Panc1 (cell line): ENCODE measurements at regions of chr10 and their contacts with region 1.

Region 1: DNA sequence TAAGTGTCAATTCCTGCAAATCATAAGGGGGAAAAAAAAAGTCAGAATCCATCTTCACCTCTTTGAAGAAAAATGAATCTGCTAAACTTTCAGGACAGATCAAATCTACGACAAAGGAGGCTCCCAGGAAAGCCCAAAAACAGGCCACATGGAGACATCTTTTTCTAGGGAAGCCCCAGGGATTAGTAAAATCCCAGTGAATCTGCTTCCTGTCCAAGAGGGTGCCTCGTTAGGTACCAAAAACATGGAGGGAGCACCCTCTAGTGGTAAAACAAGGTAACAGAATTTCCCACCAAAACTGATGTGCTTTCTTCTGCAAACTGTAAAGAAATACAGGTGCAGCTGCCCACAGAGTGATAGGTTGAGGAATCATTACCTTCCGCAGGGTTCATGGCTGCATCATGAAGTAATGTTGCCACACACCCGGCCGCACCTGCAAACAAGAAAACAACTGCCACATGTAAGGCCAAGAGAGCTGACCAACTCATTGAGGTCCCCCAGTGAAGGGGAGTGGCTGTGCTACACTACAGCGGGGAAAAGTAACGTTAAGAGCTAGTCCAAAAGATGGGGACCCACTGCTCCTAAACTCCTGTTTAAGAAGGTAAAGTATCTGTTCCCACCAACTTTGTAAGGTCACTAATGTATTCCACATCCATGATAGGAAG is 7.9 kb downstream of the SLC25A28 start:
- DNase-seq: peak; percentile 48
- ATAC-seq: peak; percentile 82
- H3K4me3 ChIP-seq: no peak overlapping the region
- H3K27ac ChIP-seq: no peak overlapping the region
- H3K4me1 ChIP-seq: peaks cover 2% of the 10 kb centered on the region
- H3K27me3 ChIP-seq: no peaks in the 10 kb centered on the region
- CTCF ChIP-seq: peak; percentile 93

Region 2: DNA sequence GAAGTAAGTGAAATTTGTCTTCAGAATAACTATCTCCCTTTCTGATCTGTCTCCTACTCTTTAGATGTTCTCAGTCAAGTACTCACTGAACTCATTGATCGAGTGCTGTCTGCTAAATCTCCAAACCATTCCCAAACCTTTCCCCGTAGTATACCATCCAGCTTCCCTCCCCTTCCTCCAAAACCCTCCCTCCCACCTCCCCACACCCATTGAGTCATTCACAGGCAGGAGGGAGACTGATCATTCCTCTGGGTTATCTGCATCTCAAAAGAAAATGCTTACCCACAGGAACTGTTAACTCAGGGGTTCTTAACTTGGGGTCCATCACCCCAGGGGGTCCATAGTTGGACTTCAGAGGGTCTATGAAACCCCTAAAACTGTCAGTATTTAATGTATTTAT is 219.3 kb before region 1 on chr10:
- CTCF ChIA-PET with region 1: no interaction called
- POLR2A ChIA-PET with region 1: no interaction called
- in situ Hi-C with region 1: no loop called
- intact Hi-C with region 1: loop called (anchors 2 kb)
- DNase-seq: no peak
- ATAC-seq: no peak
- H3K4me3 ChIP-seq: no peak overlapping the region
- H3K27ac ChIP-seq: 0 out of 2 replicates have a peak overlapping the region, but pooled peaks have one; percentile 17
- H3K4me1 ChIP-seq: peaks cover 30% of the 10 kb centered on the region
- H3K27me3 ChIP-seq: no peaks in the 10 kb centered on the region
- CTCF ChIP-seq: no peak

Region 3: GRCh38 chr10:99560277-99561126 is 51.8 kb before region 1 on chr10:
- CTCF ChIA-PET with region 1: no interaction called
- POLR2A ChIA-PET with region 1: no interaction called
- in situ Hi-C with region 1: no loop called
- intact Hi-C with region 1: loop called (anchors 1 kb)
- DNase-seq: peak; percentile 28
- ATAC-seq: peak; percentile 89
- H3K4me3 ChIP-seq: no peak overlapping the region
- H3K27ac ChIP-seq: no peak overlapping the region
- H3K4me1 ChIP-seq: no peaks in the 10 kb centered on the region
- H3K27me3 ChIP-seq: peaks cover 7% of the 10 kb centered on the region; the same call in 1 of the 2 replicates
- CTCF ChIP-seq: peak; percentile 93